Calu3 (cell line): ENCODE measurements at regions of chr1 and their contacts with region 1.

Region 1: GRCh38 chr1:169106095-169106920 is at the start of gene ATP1B1:
- DNase-seq: peak; percentile 98
- H3K4me3 Mint-ChIP-seq: peak within 1 kb of the TSS; percentile 91
- H3K27ac Mint-ChIP-seq: no peak within 1 kb of the TSS
- H3K4me1 Mint-ChIP-seq: peaks cover 28% of the 10 kb centered on the region
- H3K27me3 Mint-ChIP-seq: no peaks in the 10 kb centered on the region
- CTCF ChIP-seq: peak; percentile 53
- total RNA-seq, gene ATP1B1: 621 and 626 TPM in 2 replicates

Region 2: GRCh38 chr1:168321945-168322344 is 784.4 kb before region 1 on chr1:
- CTCF ChIA-PET with region 1: no interaction called
- intact Hi-C with region 1: no loop called
- DNase-seq: peak; percentile 18
- H3K4me3 Mint-ChIP-seq: no peak overlapping the region
- H3K27ac Mint-ChIP-seq: peak overlapping the region; percentile 12
- H3K4me1 Mint-ChIP-seq: peaks cover 31% of the 10 kb centered on the region
- H3K27me3 Mint-ChIP-seq: no peaks in the 10 kb centered on the region
- CTCF ChIP-seq: peak; percentile 37

Region 3: GRCh38 chr1:168603501-168604110 is 502.7 kb before region 1 on chr1:
- CTCF ChIA-PET with region 1: interaction called, 13 read pairs
- intact Hi-C with region 1: loop called (anchors 10 kb)
- DNase-seq: peak; percentile 87
- H3K4me3 Mint-ChIP-seq: no peak overlapping the region
- H3K27ac Mint-ChIP-seq: no peak overlapping the region
- H3K4me1 Mint-ChIP-seq: peaks cover 24% of the 10 kb centered on the region
- H3K27me3 Mint-ChIP-seq: no peaks in the 10 kb centered on the region
- CTCF ChIP-seq: peak; percentile 83

Region 4: DNA sequence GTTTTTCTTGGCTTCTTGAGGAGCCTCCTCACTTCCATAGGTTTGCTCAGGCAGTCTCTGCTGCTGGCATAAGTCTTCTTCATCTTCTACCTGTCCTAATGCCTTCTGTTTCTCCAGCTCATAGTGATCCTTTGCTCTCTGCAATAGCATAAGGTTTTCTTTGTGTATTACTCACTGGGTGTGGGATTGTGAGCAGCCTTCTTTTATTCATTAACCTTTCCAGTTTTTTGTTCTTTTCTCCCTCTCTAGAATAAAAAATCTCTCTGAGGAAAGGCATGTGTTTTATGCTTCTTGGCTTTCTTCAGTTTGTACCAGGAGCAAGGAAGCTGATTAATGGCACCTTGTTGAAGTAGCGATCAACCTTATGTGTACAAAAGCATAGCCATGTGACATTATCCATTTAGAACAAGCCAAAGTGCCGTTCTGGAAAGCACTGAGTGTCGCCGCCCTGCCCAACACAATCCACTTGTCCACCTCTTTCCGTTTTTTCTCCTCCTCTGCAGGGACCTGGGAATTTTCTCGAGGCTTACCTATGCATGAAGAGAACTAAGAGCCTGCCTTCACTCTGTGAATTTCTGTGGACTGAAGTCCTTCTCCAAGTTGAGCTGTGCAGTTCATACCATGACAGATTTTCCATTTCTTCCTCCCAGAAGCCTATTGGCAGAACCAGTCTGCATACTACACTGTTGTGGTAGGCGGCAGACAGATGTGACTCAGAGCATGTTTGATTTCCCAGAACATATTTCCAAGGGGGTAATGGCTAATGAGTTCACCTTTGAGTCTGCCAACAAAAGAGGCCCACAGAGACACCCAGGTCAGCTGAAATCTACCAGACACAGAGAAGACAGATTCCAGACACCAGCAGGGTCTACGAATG is 416.3 kb before region 1 on chr1:
- CTCF ChIA-PET with region 1: no interaction called
- intact Hi-C with region 1: loop called (anchors 2 kb)
- DNase-seq: peak; percentile 69
- H3K4me3 Mint-ChIP-seq: peak overlapping the region; percentile 67
- H3K27ac Mint-ChIP-seq: peak overlapping the region; percentile 99
- H3K4me1 Mint-ChIP-seq: peaks cover 88% of the 10 kb centered on the region
- H3K27me3 Mint-ChIP-seq: no peaks in the 10 kb centered on the region
- CTCF ChIP-seq: no peak

Region 5: GRCh38 chr1:168845140-168845539 is 261.2 kb before region 1 on chr1:
- CTCF ChIA-PET with region 1: interaction called, 3 read pairs
- intact Hi-C with region 1: loop called (anchors 5 kb)
- DNase-seq: no peak
- H3K4me3 Mint-ChIP-seq: no peak overlapping the region
- H3K27ac Mint-ChIP-seq: peak overlapping the region; percentile 12
- H3K4me1 Mint-ChIP-seq: peaks cover 50% of the 10 kb centered on the region
- H3K27me3 Mint-ChIP-seq: no peaks in the 10 kb centered on the region
- CTCF ChIP-seq: no peak

Region 6: DNA sequence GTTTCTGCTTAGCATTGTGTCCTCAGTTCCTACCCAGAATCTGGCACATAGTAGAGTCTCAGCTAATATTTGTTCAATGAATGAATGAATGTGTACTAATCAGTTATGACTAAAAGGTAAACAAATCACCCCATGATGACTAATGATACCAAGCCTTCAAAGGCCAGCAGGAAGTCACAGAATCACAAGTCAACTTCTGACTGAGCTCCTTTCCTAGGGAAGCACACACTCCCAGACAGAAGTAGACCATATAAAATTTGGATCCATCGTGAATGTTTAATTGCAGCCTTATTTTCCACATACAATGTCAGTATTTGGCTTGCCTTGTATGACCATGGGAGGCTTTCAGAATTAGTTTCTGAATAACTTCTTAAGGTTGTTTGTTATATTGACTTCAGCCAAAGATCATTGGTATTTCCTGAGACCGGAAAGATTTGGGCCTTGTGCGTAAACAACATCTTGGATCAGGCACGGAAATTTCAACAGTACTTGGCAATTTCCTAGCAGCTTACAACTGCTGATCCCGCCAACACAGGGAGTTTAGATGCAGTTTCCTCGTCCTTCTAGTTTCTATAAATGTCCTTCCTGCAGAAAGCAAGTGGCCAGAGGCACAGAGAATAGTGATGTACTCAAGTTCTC is 185.7 kb before region 1 on chr1:
- CTCF ChIA-PET with region 1: interaction called, 34 read pairs
- intact Hi-C with region 1: loop called (anchors 1 kb)
- DNase-seq: peak; percentile 64
- H3K4me3 Mint-ChIP-seq: peak overlapping the region; percentile 42
- H3K27ac Mint-ChIP-seq: peak overlapping the region; percentile 94
- H3K4me1 Mint-ChIP-seq: peaks cover 70% of the 10 kb centered on the region
- H3K27me3 Mint-ChIP-seq: no peaks in the 10 kb centered on the region
- CTCF ChIP-seq: no peak

Region 7: DNA sequence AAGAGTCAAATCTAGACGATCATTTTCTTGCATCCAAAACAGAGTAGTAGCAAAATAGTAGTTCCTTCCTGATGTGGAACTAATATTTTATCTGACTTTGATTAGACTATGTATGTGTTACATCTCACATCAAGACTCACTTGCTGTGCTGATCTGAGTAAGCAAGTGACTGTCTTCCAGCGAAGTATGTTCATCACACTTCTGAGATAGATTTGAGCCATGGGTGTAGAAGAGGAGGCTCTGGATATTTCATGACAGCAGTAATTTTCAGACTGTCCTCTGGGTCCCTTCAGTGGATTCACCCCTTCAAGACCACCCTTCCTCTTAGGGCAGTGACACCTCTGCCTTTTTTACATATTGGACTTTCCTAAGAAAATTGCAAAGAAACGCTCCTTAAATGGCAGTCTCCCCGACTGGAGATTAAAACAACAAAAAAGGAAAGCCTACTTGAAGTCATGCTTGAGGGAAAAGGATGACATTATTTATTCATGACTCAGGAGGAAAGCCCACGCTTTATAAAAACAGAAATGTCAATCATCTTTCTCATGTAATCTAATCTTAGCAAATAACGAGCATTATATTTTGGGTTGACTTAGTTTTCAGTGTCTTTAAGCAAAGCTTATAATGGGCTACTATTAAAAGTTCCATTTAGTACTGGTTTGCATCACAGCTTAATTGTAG is 22.9 kb after region 1 on chr1:
- CTCF ChIA-PET with region 1: no interaction called
- intact Hi-C with region 1: no loop called
- DNase-seq: no peak
- H3K4me3 Mint-ChIP-seq: peak overlapping the region; percentile 6
- H3K27ac Mint-ChIP-seq: peak overlapping the region; percentile 53
- H3K4me1 Mint-ChIP-seq: peaks cover 86% of the 10 kb centered on the region
- H3K27me3 Mint-ChIP-seq: no peaks in the 10 kb centered on the region
- CTCF ChIP-seq: no peak

Region 8: DNA sequence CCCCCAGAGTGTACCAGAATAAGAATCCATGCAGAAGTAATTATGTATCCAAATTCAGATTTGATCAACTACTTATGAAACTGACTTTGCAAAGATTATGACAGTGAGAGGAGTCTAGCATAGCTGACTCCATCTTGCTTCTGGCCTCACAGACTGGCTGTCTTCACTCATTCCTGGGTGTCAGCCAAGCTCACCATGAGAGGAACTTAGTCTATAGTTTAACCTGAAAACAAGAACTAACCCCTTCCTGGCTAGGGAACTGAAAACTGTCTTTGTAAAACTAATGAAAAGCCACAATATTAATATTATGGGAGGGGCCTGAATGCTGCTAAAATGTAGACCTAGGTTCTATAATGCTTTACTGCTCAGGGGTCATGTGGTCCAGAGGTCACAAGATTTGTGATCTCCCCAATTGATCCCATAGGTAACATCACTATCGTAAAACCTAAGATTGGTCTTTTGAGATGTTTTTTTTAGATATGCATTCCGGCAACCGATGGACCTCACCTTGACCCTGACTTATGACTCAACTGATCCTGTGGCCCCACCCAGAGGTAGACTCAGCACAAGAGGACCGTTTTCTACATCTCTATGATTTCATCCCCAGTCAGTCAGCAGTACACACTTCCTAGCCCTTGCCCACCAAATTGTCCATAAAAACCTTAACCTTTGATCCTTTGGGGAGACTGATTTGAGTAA is 55.3 kb after region 1 on chr1:
- CTCF ChIA-PET with region 1: no interaction called
- intact Hi-C with region 1: no loop called
- DNase-seq: peak; percentile 23
- H3K4me3 Mint-ChIP-seq: no peak overlapping the region
- H3K27ac Mint-ChIP-seq: no peak overlapping the region
- H3K4me1 Mint-ChIP-seq: peaks cover 10% of the 10 kb centered on the region
- H3K27me3 Mint-ChIP-seq: no peaks in the 10 kb centered on the region
- CTCF ChIP-seq: no peak

Region 9: DNA sequence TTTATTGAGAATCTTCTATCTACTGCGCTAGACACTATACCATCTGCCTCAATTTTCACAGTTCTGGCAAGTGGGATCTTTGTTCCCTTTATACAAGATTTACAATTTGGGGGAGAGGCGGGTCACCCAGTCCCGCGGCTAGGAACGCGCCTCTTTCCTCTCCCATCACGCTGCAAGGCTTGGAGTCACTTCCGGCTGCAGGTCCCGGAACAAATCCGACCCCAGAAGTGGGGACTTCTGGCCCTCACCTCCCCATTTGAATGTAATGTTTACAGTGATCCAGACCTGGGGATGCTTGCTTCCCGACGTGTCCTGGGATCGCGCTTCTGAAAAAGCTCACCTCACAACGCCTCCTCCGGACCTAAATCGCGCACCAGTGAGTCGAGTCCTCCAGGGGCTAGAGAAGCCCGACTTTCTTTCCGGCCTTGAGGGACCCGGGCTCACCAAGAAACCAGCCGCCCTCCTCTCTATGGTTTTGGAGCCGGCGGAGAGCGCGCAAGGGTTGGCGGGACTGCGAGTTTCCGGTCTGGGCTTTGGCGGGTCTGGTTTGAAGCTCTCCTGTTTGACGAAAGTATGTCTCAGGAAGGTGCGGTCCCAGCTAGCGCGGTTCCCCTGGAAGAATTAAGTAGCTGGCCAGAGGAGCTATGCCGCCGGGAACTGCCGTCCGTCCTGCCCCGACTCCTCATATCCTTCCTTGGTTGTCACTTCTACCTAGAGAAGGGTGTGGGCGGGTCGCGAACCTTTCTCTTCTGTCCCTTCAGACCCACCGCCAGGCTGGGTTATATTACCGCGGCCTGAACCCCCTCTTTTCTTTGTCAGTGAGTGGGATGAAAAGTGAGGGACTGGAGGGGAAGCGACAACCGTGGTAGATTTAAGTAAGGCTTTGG is 688.5 kb after region 1 on chr1 and contains the start of gene METTL18:
- CTCF ChIA-PET with region 1: no interaction called
- intact Hi-C with region 1: no loop called
- DNase-seq: peak; percentile 94
- H3K4me3 Mint-ChIP-seq: peak within 1 kb of the TSS; percentile 93
- H3K27ac Mint-ChIP-seq: peak within 1 kb of the TSS; percentile 93
- H3K4me1 Mint-ChIP-seq: peaks cover 31% of the 10 kb centered on the region
- H3K27me3 Mint-ChIP-seq: no peaks in the 10 kb centered on the region
- CTCF ChIP-seq: no peak
- total RNA-seq, gene METTL18: 11.2 and 13.3 TPM in 2 replicates